BJ (cell line): ENCODE measurements at regions of chr3 and their contacts with region 1.

Region 1: GRCh38 chr3:100492059-100493006 is at the start of gene TMEM45A:
- DNase-seq: peak; percentile 76
- H3K4me3 ChIP-seq: peak within 1 kb of the TSS; percentile 52
- H3K27me3 ChIP-seq: no peaks in the 10 kb centered on the region
- CTCF ChIP-seq: no peak
- polyA plus RNA-seq, gene TMEM45A: 35.1 and 68.4 TPM in 2 replicates

Region 2: DNA sequence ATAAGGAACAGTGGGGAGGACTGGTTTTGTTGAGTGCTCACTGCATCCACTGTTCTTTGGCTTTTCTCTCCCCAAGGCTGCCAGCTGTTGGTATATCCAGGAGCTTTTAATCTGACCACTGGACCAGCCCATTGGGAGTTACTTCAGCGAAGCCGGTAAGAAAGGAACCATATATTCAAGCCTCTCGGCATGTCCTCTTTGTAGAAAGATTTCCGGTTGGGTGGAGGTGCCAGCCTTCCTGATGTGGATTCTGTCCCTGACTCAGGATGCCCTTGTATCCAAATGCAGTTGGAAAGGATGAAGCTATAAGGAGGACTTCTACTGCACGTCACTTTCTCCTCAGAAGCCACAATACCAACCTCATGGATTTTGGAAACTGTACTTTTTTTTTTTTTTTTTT is 143.6 kb before region 1 on chr3:
- CTCF ChIA-PET with region 1: no interaction called
- POLR2A ChIA-PET with region 1: no interaction called
- DNase-seq: no peak
- H3K4me3 ChIP-seq: no peak overlapping the region
- H3K27me3 ChIP-seq: no peaks in the 10 kb centered on the region
- CTCF ChIP-seq: no peak

Region 3: DNA sequence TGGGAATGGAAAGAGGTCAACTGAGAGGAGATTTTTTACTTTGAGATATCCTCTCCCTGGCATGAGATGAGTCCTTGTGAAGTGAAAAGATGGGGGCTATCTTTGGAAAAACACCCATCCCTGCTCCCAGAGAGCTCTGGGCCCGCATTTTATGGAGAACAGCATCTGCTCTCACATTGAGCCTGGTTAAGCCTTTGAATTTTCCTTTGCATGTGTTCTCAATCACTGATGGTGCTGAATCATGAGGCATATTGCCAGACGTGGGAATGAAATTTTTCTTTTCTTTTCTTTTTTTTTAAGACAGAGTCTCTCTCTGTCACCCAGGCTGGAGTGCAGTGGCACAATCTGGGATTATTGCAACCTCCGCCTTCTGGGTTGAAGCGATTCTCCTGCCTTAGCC is 24.5 kb after region 1 on chr3:
- CTCF ChIA-PET with region 1: no interaction called
- POLR2A ChIA-PET with region 1: interaction called, 12 read pairs
- DNase-seq: no peak
- H3K4me3 ChIP-seq: no peak overlapping the region
- H3K27me3 ChIP-seq: no peaks in the 10 kb centered on the region
- CTCF ChIP-seq: no peak

Region 4: DNA sequence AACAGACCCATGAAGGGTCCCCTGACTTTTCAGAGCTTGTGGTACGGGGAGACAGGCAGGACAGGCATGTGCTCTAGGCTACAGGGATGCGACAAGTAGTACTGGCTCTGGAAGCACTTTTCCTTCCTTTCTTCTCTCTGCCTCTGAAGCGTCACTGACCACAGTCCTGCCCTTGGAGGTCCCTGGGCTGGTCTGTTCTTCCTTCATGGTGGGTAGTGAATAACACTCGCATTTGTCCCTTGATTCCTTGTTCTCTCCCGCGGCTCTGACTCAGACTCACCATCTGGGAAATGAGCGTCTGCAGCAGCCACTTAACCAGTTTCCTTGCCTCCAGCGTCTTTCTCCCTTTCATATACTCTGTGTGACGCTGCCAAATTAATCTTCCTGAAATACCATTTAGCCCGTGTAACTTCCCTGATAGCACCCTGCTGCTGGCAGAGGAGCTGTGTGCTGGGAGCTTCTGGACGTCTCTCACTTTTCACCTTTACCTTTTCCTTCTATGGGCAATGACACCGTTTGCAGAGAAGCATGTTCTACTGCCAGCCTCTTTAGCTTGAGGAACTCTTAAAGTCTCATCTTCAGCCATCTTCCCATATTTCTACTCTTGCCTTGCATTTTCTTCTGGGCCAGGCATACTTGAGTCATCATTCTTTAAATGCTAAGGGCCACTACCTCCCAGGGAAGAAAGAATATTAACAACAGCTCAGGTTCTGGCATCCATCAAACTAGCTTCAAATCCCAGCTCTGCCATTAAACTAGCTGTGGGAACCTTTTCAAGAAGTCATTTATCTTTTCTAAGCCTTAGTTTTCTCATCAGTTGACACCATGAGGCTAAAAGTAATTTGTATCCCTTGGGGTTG is 33.6 kb after region 1 on chr3:
- CTCF ChIA-PET with region 1: no interaction called
- POLR2A ChIA-PET with region 1: interaction called, 14 read pairs
- DNase-seq: peak; percentile 88
- H3K4me3 ChIP-seq: peak overlapping the region; percentile 6; the same call in 1 of the 2 replicates
- H3K27me3 ChIP-seq: no peaks in the 10 kb centered on the region
- CTCF ChIP-seq: no peak

Region 5: GRCh38 chr3:100590114-100590839 is 97.9 kb after region 1 on chr3:
- CTCF ChIA-PET with region 1: interaction called, 3 read pairs
- POLR2A ChIA-PET with region 1: interaction called, 17 read pairs
- DNase-seq: peak; percentile 21
- H3K4me3 ChIP-seq: no peak overlapping the region
- H3K27me3 ChIP-seq: no peaks in the 10 kb centered on the region; the same call in 1 of the 2 replicates
- CTCF ChIP-seq: peak; percentile 79